Heart right ventricle (tissue), 16 donors: ENCODE measurements at regions of chrX and their contacts with region 1.

Region 1: GRCh38 chrX:68462653-68463052 is 29.4 kb upstream of the OPHN1 start:
- DNase-seq: peak in 1 of 2 donors; percentile 47
- ATAC-seq: peak in 5 of 8 donors; percentile 16 to 52 (median 42)
- H3K4me3 ChIP-seq: no peak overlapping the region
- H3K27ac ChIP-seq: no peak overlapping the region
- H3K4me1 ChIP-seq: no peaks in the 10 kb centered on the region
- H3K27me3 ChIP-seq: peaks cover 0 to 38% (median 0%) of the 10 kb centered on the region in 7 donors
- CTCF ChIP-seq: peak; percentile 38 to 70 (median 62)

Region 2: GRCh38 chrX:68196939-68197791 is 265.5 kb before region 1 on chrX:
- intact Hi-C with region 1: loop called (anchors 1 to 10 kb)
- DNase-seq: peak in 1 of 2 donors; percentile 19
- ATAC-seq: peak in 3 of 8 donors; percentile 44 to 60 (median 44)
- H3K4me3 ChIP-seq: no peak overlapping the region
- H3K27ac ChIP-seq: no peak overlapping the region
- H3K4me1 ChIP-seq: peaks cover 0 to 12% (median 0%) of the 10 kb centered on the region in 9 donors
- H3K27me3 ChIP-seq: peaks cover 0 to 10% (median 0%) of the 10 kb centered on the region in 7 donors
- CTCF ChIP-seq: peak; percentile 42 to 77 (median 64)